MCF 10A (cell line): ENCODE measurements at regions of chr2 and their contacts with region 1.

Region 1: DNA sequence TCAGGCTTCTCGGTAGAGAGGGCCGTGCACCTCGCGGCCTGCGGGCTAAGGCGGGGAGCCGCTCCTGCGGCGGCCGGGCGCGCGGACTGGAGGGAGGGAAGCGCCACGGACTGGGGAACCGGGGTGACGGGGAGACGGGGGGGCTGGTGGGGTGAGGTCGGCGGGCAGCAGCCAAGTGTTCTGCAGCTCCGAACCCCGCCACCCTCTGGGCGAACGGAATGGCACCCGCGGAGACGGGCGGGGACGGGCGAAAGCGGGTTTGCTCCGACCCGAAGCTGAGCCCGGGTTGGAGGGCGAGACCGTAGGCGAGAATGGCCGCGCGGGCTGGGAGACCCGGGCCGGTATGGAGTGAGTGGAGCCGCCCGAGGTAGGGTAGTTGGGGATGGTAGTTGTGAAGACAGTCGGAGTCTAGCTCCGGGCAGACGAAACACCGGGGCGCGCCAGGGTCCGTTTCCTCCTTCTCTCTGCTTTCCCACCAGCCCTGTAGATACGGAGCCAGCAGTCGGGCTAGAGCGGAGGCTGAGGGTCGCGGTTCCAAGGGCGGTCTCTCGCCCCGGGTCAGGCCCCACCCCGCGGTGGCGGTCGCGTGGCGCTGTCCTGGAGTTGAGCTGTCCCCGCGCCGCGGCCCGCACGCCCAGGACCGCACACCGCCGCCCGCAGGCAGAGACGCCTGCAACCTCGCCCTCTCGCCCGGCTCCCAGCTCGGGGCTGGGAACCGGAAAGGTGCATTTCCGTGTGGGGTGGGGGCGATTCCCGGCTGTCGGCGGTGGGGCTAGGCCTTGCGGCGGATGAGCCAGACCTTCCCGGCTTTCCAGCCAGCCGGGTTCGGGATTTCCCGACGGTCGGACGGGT is 160.3 kb upstream of the SIX2 start:
- DNase-seq: peak; percentile 57
- H3K4me3 Mint-ChIP-seq: peak overlapping the region; percentile 95
- H3K27ac Mint-ChIP-seq: peak overlapping the region; percentile 92
- H3K4me1 Mint-ChIP-seq: peaks cover 26% of the 10 kb centered on the region
- H3K27me3 Mint-ChIP-seq: no peaks in the 10 kb centered on the region
- CTCF ChIP-seq: no peak

Region 2: GRCh38 chr2:44981136-44982108 is 188.1 kb before region 1 on chr2:
- CTCF ChIA-PET with region 1: interaction called, 9 read pairs
- POLR2A ChIA-PET with region 1: interaction called, 3 read pairs
- intact Hi-C with region 1: loop called (anchors 5 kb)
- DNase-seq: peak; percentile 75
- H3K4me3 Mint-ChIP-seq: no peak overlapping the region
- H3K27ac Mint-ChIP-seq: no peak overlapping the region
- H3K4me1 Mint-ChIP-seq: no peaks in the 10 kb centered on the region
- H3K27me3 Mint-ChIP-seq: no peaks in the 10 kb centered on the region
- CTCF ChIP-seq: peak; percentile 84

Region 3: GRCh38 chr2:45024600-45025291 is 144.8 kb before region 1 on chr2:
- CTCF ChIA-PET with region 1: interaction called, 4 read pairs
- POLR2A ChIA-PET with region 1: interaction called, 5 read pairs
- intact Hi-C with region 1: loop called (anchors 1 kb)
- DNase-seq: peak; percentile 96
- H3K4me3 Mint-ChIP-seq: no peak overlapping the region
- H3K27ac Mint-ChIP-seq: peak overlapping the region; percentile 8
- H3K4me1 Mint-ChIP-seq: peaks cover 28% of the 10 kb centered on the region
- H3K27me3 Mint-ChIP-seq: no peaks in the 10 kb centered on the region
- CTCF ChIP-seq: peak; percentile 54

Region 4: DNA sequence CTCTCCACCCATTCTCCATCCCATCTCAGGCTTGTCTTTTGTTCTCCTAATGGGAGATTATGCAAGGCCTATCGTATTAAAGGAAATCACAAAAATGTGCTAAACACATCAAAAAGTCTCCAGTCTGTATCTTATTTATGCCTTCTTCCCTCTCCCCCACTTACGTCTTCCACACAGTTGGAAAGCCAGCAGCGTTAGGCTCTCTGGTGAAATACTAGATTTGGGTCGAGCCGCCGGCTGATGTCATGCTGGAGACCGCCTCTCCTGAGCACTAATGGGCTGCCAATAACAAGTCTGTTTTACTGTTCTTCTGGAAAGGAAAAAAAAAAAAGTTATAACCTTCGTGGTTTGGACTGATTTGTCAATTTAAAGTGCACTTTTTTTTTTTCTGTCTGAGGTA is 22.4 kb after region 1 on chr2:
- CTCF ChIA-PET with region 1: no interaction called
- POLR2A ChIA-PET with region 1: no interaction called
- intact Hi-C with region 1: no loop called
- DNase-seq: no peak
- H3K4me3 Mint-ChIP-seq: no peak overlapping the region
- H3K27ac Mint-ChIP-seq: no peak overlapping the region
- H3K4me1 Mint-ChIP-seq: peaks cover 23% of the 10 kb centered on the region
- H3K27me3 Mint-ChIP-seq: no peaks in the 10 kb centered on the region
- CTCF ChIP-seq: no peak

Region 5: DNA sequence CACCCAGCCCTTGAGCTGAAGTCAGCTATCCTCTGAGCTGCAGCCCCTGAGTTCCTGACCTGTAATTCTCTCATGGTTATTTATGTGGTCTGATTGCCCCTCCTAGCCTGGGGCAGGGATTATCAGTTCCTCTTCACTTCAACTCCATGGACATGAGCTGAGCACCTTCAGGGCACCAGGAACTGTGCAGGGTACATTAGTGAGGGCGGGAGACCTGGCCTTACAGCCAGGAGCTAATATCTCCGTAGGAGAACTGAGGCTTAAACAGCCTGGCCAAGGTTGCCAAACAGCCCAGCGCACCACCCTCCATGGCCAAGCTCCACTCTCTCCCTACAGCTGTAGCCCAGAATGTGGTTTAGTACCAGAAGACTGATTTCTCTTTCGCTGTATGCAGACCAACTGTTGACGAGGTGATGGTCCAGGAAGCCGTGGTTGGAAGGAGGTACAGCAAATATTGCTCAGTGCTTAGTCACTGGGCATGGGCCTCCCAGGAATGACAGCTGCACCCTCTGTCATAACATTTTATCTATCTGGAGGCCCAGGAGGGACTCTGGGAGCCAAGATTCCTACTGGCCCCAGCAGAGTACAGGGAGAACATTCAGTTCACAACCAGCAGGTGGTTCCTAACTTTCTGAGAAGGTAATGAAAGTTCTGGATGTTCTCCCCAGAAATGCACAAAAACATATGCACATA is 68.4 kb after region 1 on chr2:
- CTCF ChIA-PET with region 1: interaction called, 3 read pairs
- POLR2A ChIA-PET with region 1: interaction called, 5 read pairs
- intact Hi-C with region 1: loop called (anchors 1 kb)
- DNase-seq: peak; percentile 96
- H3K4me3 Mint-ChIP-seq: peak overlapping the region; percentile 22
- H3K27ac Mint-ChIP-seq: peak overlapping the region; percentile 95
- H3K4me1 Mint-ChIP-seq: peaks cover 23% of the 10 kb centered on the region
- H3K27me3 Mint-ChIP-seq: no peaks in the 10 kb centered on the region
- CTCF ChIP-seq: peak; percentile 34

Region 6: GRCh38 chr2:45494269-45494977 is 324.9 kb after region 1 on chr2:
- CTCF ChIA-PET with region 1: interaction called, 21 read pairs
- POLR2A ChIA-PET with region 1: interaction called, 4 read pairs
- intact Hi-C with region 1: loop called (anchors 2 kb)
- DNase-seq: peak; percentile 71
- H3K4me3 Mint-ChIP-seq: no peak overlapping the region
- H3K27ac Mint-ChIP-seq: no peak overlapping the region
- H3K4me1 Mint-ChIP-seq: peaks cover 5% of the 10 kb centered on the region
- H3K27me3 Mint-ChIP-seq: no peaks in the 10 kb centered on the region
- CTCF ChIP-seq: peak; percentile 62